CD8-positive, alpha-beta T cell (primary cell): ENCODE measurements at regions of chr14 and their contacts with region 1.

Region 1: GRCh38 chr14:58427281-58428117 is at the starts of genes KIAA0586 and TIMM9:
- DNase-seq: peak; percentile 93 to 99 (median 94)
- ATAC-seq: peak; percentile 91
- H3K4me3 ChIP-seq: peak within 1 kb of the TSS; percentile 91 to 94
- H3K4me3 Mint-ChIP-seq: peak within 1 kb of the TSS; percentile 95
- H3K27ac ChIP-seq: peak within 1 kb of the TSS; percentile 96 to 98
- H3K27ac Mint-ChIP-seq: peak within 1 kb of the TSS; percentile 99
- H3K4me1 ChIP-seq: peaks cover 26% of the 10 kb centered on the region
- H3K4me1 Mint-ChIP-seq: peaks cover 50% of the 10 kb centered on the region
- H3K27me3 ChIP-seq: no peaks in the 10 kb centered on the region
- H3K27me3 Mint-ChIP-seq: no peaks in the 10 kb centered on the region
- CTCF ChIP-seq: no peak
- total RNA-seq, gene KIAA0586: 15.4 to 15.9 TPM
- total RNA-seq, gene TIMM9: 28.1 to 37.5 TPM

Region 2: DNA sequence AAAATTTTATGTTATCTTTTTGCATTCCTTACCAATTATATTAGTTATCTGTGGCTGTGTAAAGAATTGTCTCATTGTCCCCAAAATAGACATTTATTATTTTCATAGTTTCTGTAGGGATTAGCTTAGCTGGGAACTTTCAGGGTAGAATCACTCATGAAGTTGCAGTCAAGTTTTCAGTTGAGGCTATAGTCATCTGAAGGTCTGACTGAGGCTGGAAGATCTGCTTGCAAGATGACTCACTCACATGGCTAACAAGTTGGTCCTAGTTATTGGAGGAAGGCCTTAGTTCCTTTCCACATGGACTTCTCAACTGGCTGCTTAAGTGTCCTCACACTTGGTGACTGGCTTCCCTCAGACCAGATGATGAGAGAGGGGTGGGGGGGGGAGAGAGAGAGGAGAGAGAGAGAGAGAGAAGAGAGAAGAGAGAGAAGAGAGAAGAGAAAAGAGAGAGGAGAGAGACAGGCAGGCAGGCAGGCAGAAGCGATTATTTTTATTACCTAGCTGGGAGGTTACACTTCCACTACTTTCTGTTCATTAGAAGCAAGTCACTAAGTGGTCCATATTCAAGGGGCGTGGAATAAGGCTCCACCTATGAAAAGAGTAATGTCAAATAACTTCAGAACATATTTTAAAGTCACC is 1152.4 kb before region 1 on chr14:
- CTCF ChIA-PET with region 1: no interaction called
- POLR2A ChIA-PET with region 1: no interaction called
- intact Hi-C with region 1: loop called in 1 of 2 experiments (anchors 10 kb)
- DNase-seq: no peak
- ATAC-seq: no peak
- H3K4me3 ChIP-seq: no peak overlapping the region
- H3K4me3 Mint-ChIP-seq: no peak overlapping the region
- H3K27ac ChIP-seq: no peak overlapping the region
- H3K27ac Mint-ChIP-seq: no peak overlapping the region
- H3K4me1 ChIP-seq: peaks cover 22% of the 10 kb centered on the region
- H3K4me1 Mint-ChIP-seq: peaks cover 41% of the 10 kb centered on the region
- H3K27me3 ChIP-seq: no peaks in the 10 kb centered on the region
- H3K27me3 Mint-ChIP-seq: no peaks in the 10 kb centered on the region
- CTCF ChIP-seq: no peak

Region 3: GRCh38 chr14:58199726-58200479 is 227.6 kb before region 1 on chr14 and contains the start of gene ACTR10:
- CTCF ChIA-PET with region 1: no interaction called
- POLR2A ChIA-PET with region 1: interaction called, 16 read pairs
- intact Hi-C with region 1: loop called (anchors 1 kb)
- DNase-seq: peak; percentile 76 to 95 (median 85)
- ATAC-seq: peak; percentile 87
- H3K4me3 ChIP-seq: peak within 1 kb of the TSS; percentile 75 to 92
- H3K4me3 Mint-ChIP-seq: peak within 1 kb of the TSS; percentile 94
- H3K27ac ChIP-seq: peak within 1 kb of the TSS; percentile 86 to 87
- H3K27ac Mint-ChIP-seq: peak within 1 kb of the TSS; percentile 98
- H3K4me1 ChIP-seq: peaks cover 25% of the 10 kb centered on the region
- H3K4me1 Mint-ChIP-seq: peaks cover 46% of the 10 kb centered on the region
- H3K27me3 ChIP-seq: no peaks in the 10 kb centered on the region
- H3K27me3 Mint-ChIP-seq: no peaks in the 10 kb centered on the region
- CTCF ChIP-seq: no peak
- total RNA-seq, gene ACTR10: 47.5 to 47.7 TPM

Region 4: GRCh38 chr14:58244556-58245387 is 182.7 kb before region 1 on chr14 and contains the start of gene PSMA3:
- CTCF ChIA-PET with region 1: no interaction called
- POLR2A ChIA-PET with region 1: interaction called, 11 read pairs
- intact Hi-C with region 1: loop called (anchors 1 to 2 kb)
- DNase-seq: peak; percentile 94 to 98 (median 98)
- ATAC-seq: peak; percentile 83
- H3K4me3 ChIP-seq: peak within 1 kb of the TSS; percentile 92 to 93
- H3K4me3 Mint-ChIP-seq: peak within 1 kb of the TSS; percentile 99
- H3K27ac ChIP-seq: peak within 1 kb of the TSS; percentile 91 to 96
- H3K27ac Mint-ChIP-seq: peak within 1 kb of the TSS; percentile 98
- H3K4me1 ChIP-seq: peaks cover 30% of the 10 kb centered on the region
- H3K4me1 Mint-ChIP-seq: peaks cover 49% of the 10 kb centered on the region
- H3K27me3 ChIP-seq: no peaks in the 10 kb centered on the region
- H3K27me3 Mint-ChIP-seq: no peaks in the 10 kb centered on the region
- CTCF ChIP-seq: no peak
- total RNA-seq, gene PSMA3: 105 to 106 TPM

Region 5: DNA sequence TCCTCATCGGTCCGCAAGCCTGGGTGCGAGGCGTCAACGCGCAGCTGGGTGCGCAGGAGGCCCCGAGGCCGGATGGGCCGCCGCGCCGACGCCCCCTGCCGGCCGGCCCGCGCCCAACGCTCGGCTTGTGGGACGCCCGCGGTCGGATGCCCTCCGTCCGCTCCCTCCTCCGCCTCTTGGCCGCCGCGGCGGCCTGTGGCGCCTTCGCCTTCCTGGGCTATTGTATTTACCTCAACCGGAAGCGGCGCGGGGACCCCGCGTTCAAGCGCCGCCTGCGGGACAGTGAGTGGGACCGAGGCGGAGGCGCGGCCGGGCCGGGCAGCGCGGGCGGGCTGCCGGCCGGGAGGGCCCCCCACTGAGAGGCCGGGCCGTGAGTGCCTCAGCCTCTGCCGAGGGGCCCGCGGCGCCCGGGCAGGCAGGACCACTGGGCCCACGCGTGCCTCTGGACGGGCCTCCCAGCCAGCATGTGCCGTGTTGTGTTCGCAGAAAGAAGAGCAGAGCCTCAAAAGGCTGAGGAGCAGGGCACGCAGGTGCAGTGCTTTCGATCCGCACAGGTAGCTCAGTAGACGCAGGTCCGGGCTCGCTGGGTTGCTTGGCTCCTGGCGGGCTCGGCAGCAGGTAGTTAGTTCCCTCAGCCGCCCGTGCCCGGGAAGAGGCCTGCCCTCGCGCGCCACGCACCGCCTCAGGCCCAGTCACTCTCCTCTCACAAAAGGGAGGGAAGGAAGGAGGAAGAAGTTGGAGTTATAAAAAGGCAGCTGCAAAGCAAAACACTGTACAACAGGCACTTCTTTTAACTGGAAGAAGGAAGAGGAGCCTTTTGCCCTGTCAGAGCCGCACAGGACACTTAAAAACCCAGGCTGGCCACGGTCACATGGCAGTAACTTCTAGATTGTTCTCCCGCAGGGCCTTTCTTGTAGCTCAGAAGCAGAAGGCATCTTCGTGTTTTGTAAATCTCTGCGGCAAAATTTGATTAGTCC is 31.4 kb before region 1 on chr14 and contains the start of gene TOMM20L:
- CTCF ChIA-PET with region 1: interaction called, 4 read pairs
- POLR2A ChIA-PET with region 1: interaction called, 33 read pairs
- intact Hi-C with region 1: loop called (anchors 1 to 2 kb)
- DNase-seq: peak; percentile 48 to 86 (median 69)
- ATAC-seq: peak; percentile 81
- H3K4me3 ChIP-seq: peak within 1 kb of the TSS; percentile 27 to 59
- H3K4me3 Mint-ChIP-seq: peak within 1 kb of the TSS; percentile 84
- H3K27ac ChIP-seq: peak within 1 kb of the TSS; percentile 69 to 75
- H3K27ac Mint-ChIP-seq: peak within 1 kb of the TSS; percentile 93
- H3K4me1 ChIP-seq: peaks cover 9% of the 10 kb centered on the region
- H3K4me1 Mint-ChIP-seq: peaks cover 13% of the 10 kb centered on the region
- H3K27me3 ChIP-seq: no peaks in the 10 kb centered on the region
- H3K27me3 Mint-ChIP-seq: no peaks in the 10 kb centered on the region
- CTCF ChIP-seq: peak; percentile 94
- total RNA-seq, gene TOMM20L: 0.92 TPM in 1 of 2 experiments, not detected in the other

Region 6: DNA sequence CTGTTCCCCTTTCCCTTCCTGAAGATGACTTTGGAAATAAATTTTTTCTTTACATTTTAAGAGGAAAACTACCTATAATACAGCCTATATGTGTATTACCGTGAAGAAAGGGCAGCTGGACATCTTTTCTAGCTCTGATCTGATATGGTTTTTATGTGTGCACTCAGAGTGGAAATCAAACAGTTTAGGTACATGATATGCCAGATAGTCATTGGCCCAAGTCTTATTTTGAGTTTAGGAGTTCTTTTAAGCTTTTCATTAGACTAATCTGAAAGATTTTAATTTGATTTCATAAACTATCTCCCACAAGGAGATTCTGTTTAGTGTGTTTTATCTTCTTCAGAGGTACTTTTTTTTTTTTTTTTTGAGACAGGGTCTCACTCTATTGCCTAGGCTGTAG is 48.8 kb after region 1 on chr14:
- CTCF ChIA-PET with region 1: no interaction called
- POLR2A ChIA-PET with region 1: no interaction called
- intact Hi-C with region 1: no loop called
- DNase-seq: no peak
- ATAC-seq: no peak
- H3K4me3 ChIP-seq: no peak overlapping the region
- H3K4me3 Mint-ChIP-seq: no peak overlapping the region
- H3K27ac ChIP-seq: no peak overlapping the region
- H3K27ac Mint-ChIP-seq: no peak overlapping the region
- H3K4me1 ChIP-seq: no peaks in the 10 kb centered on the region
- H3K4me1 Mint-ChIP-seq: no peaks in the 10 kb centered on the region
- H3K27me3 ChIP-seq: no peaks in the 10 kb centered on the region
- H3K27me3 Mint-ChIP-seq: no peaks in the 10 kb centered on the region
- CTCF ChIP-seq: no peak